Activated B cell treated with CpG ODN at 0.5 μM for 24 hours (primary cell): ENCODE measurements at regions of chr5 and their contacts with region 1.

Region 1: GRCh38 chr5:138352071-138352721 is at the start of gene KDM3B:
- DNase-seq: peak; percentile 99
- ATAC-seq: peak; percentile 86
- H3K4me3 Mint-ChIP-seq: peak within 1 kb of the TSS; percentile 92
- H3K27ac Mint-ChIP-seq: peak within 1 kb of the TSS; percentile 91
- H3K4me1 Mint-ChIP-seq: peaks cover 51% of the 10 kb centered on the region
- H3K27me3 Mint-ChIP-seq: no peaks in the 10 kb centered on the region
- CTCF ChIP-seq: peak; percentile 99
- total RNA-seq, gene KDM3B: 85.5 and 94.0 TPM in 2 replicates

Region 2: GRCh38 chr5:138213161-138214029 is 138.8 kb before region 1 on chr5 and contains the start of gene CDC23:
- CTCF ChIA-PET with region 1: interaction called, 6 read pairs
- POLR2A ChIA-PET with region 1: interaction called, 6 read pairs
- intact Hi-C with region 1: loop called (anchors 1 kb)
- DNase-seq: peak; percentile 67
- ATAC-seq: peak; percentile 96
- H3K4me3 Mint-ChIP-seq: peak within 1 kb of the TSS; percentile 99
- H3K27ac Mint-ChIP-seq: peak within 1 kb of the TSS; percentile 93
- H3K4me1 Mint-ChIP-seq: peaks cover 27% of the 10 kb centered on the region
- H3K27me3 Mint-ChIP-seq: no peaks in the 10 kb centered on the region
- CTCF ChIP-seq: no peak
- total RNA-seq, gene CDC23: 31.9 and 35.0 TPM in 2 replicates

Region 3: DNA sequence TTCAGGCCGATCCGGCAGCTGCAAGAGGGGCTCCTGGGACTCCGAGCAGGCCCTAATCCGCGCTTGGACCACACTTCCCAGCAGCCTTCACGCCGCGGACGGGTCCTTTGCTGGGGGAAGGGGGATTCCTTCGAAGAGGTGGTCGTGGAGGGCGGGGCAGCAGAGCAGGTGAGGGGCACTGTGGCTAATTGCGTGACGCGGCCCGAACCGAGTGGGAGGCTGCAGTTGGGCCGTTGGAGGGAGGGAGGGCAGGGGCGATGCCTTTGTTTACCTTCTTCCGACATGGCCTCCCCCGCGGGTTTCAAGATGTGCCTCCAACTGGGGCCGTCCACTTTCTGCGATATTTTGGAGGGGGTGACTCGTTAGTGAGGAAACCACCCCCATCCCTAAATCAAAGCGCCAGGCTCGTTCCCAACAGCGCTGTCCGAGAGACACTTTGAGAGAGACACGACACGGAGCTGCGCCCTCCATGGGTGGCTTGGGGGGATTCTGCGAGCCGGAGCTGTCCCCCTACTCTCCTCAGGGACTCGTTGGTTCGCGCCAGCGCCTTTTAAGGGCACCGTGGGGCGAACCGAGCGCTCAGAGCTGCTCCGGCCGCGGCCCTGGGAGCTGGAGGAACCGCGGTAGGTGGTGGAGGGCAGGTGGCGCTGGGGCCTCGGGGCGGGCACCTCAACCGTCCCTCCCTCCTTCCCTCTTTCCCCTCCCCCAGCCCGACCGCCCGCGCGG is 14.3 kb before region 1 on chr5 and contains the start of gene FAM53C:
- CTCF ChIA-PET with region 1: interaction called, 134 read pairs
- POLR2A ChIA-PET with region 1: interaction called, 322 read pairs
- intact Hi-C with region 1: loop called (anchors 1 kb)
- DNase-seq: peak; percentile 97
- ATAC-seq: peak; percentile 81
- H3K4me3 Mint-ChIP-seq: peak within 1 kb of the TSS; percentile 90
- H3K27ac Mint-ChIP-seq: peak within 1 kb of the TSS; percentile 100
- H3K4me1 Mint-ChIP-seq: peaks cover 37% of the 10 kb centered on the region
- H3K27me3 Mint-ChIP-seq: no peaks in the 10 kb centered on the region
- CTCF ChIP-seq: no peak
- total RNA-seq, gene FAM53C: 23.5 and 24.9 TPM in 2 replicates

Region 4: DNA sequence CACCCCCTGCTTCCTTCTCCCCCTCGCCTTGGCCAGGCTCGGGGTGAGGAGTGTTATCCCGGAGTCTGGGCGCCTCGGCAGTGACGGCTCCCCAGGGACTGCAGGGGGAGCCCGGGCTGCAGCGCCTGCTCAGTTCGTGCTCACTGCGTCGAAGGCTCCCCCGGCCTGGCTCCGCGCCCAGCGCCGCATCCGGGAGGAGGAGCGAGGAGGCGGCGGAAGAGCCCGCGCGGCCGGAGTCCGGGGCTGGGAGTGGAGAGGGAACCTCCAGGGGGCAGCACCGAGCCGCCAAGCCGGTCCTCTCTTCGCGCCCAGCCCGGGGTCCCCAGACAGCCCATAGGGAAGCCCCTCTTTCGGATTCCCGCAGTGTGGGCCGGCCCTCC is 111.8 kb after region 1 on chr5:
- CTCF ChIA-PET with region 1: interaction called, 5 read pairs
- POLR2A ChIA-PET with region 1: interaction called, 5 read pairs
- intact Hi-C with region 1: loop called (anchors 1 kb)
- DNase-seq: peak; percentile 92
- ATAC-seq: peak; percentile 56
- H3K4me3 Mint-ChIP-seq: peak overlapping the region; percentile 89
- H3K27ac Mint-ChIP-seq: peak overlapping the region; percentile 92
- H3K4me1 Mint-ChIP-seq: peaks cover 49% of the 10 kb centered on the region
- H3K27me3 Mint-ChIP-seq: no peaks in the 10 kb centered on the region
- CTCF ChIP-seq: peak; percentile 87

Region 5: GRCh38 chr5:139126711-139127111 is 774.5 kb after region 1 on chr5:
- CTCF ChIA-PET with region 1: no interaction called
- POLR2A ChIA-PET with region 1: no interaction called
- intact Hi-C with region 1: no loop called
- DNase-seq: no peak
- ATAC-seq: no peak
- H3K4me3 Mint-ChIP-seq: no peak overlapping the region
- H3K27ac Mint-ChIP-seq: no peak overlapping the region
- H3K4me1 Mint-ChIP-seq: no peaks in the 10 kb centered on the region
- H3K27me3 Mint-ChIP-seq: no peaks in the 10 kb centered on the region
- CTCF ChIP-seq: no peak